Head of caudate nucleus (tissue), 42 donors: ENCODE measurements at regions of chr22 and their contacts with region 1.

Region 1: GRCh38 chr22:45096256-45096907 is 67.3 kb upstream of the NUP50 start:
- DNase-seq: peak; percentile 41 to 87 (median 72)

Region 2: GRCh38 chr22:44847917-44848741 is 248.3 kb before region 1 on chr22:
- intact Hi-C with region 1: no loop called
- DNase-seq: no peak

Region 3: DNA sequence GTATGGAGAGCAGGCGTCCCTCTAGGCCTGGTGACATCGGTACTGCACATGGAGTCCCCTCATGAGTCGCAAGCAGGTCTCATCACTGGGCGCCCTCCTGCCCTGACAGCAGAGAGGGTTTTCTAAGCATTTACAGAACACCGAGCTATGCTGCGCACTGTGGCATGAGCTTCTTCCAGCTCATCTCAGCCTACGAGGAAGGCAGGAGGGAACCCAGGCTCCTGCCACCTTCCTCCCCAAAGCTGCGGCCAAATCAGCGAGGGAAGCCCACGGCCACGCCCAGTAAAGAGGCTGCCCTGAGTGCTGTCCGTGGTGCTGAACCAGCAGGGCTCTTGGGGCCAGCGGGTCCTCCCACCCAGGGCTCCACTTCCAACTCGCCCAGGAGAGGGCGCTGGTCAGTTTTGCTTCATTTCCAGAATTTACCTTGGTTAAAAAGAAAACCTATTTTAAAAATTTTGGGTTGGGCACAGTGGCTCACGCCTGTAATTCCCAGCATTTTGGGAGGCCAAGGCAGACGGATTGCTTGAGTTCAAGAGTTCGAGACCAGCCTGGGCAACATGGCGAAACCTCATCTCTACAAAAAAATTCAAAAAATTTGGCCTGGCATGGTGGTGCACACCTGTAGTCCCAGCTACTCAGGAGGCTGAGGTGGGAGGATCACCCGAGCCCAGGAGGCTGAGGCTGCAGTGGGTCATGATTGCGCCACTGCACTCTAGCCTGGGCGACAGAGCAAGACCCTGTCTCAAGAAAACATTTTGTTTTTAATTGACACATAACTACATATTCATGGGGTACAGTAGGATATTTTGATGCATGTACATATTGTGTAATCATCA is 120.7 kb before region 1 on chr22:
- intact Hi-C with region 1: loop called (anchors 5 kb)
- DNase-seq: peak; percentile 44 to 92 (median 75)